A549 (cell line): ENCODE measurements at regions of chr2 and their contacts with region 1.

Region 1: GRCh38 chr2:61658841-61659780 is 121.0 kb upstream of the XPO1 start:
- DNase-seq: peak; percentile 72 to 81
- ATAC-seq: peak; percentile 90 to 96
- H3K4me3 ChIP-seq: peak overlapping the region; percentile 4
- H3K27ac ChIP-seq: peak overlapping the region; percentile 12 to 22; a peak in 4 of 6 replicates
- H3K4me1 ChIP-seq: peaks cover 11% of the 10 kb centered on the region
- CTCF ChIP-seq: peak; percentile 93
- EP300 ChIP-seq: no peak
- POLR2A ChIP-seq: no peak
- RAD21 ChIP-seq: peak; percentile 92

Region 2: GRCh38 chr2:61645911-61646310 is 13.2 kb before region 1 on chr2:
- CTCF ChIA-PET with region 1: interaction called, 22 read pairs
- POLR2A ChIA-PET with region 1: no interaction called
- DNase-seq: no peak
- ATAC-seq: no peak
- H3K4me3 ChIP-seq: no peak overlapping the region
- H3K27ac ChIP-seq: no peak overlapping the region
- H3K4me1 ChIP-seq: no peaks in the 10 kb centered on the region
- CTCF ChIP-seq: no peak
- EP300 ChIP-seq: no peak
- POLR2A ChIP-seq: no peak
- RAD21 ChIP-seq: no peak